ENCODE measurements at regions of chr5 and their contacts with region 1.

Region 1: GRCh38 chr5:43305948-43306565 is 7.2 kb downstream of the HMGCS1 start:
- DNase-seq: peak; percentile 76
- H3K4me3 Mint-ChIP-seq: peak overlapping the region; percentile 5
- H3K27ac Mint-ChIP-seq: peak overlapping the region; percentile 50
- H3K4me1 Mint-ChIP-seq: peaks cover 71% of the 10 kb centered on the region
- H3K27me3 Mint-ChIP-seq: no peaks in the 10 kb centered on the region

Region 2: GRCh38 chr5:43191740-43192557 is 114.1 kb before region 1 on chr5 and contains the start of gene NIM1K:
- intact Hi-C with region 1: loop called (anchors 1 kb)
- DNase-seq: peak; percentile 85
- H3K4me3 Mint-ChIP-seq: peak within 1 kb of the TSS; percentile 86
- H3K27ac Mint-ChIP-seq: peak within 1 kb of the TSS; percentile 86
- H3K4me1 Mint-ChIP-seq: peaks cover 31% of the 10 kb centered on the region
- H3K27me3 Mint-ChIP-seq: peaks cover 15% of the 10 kb centered on the region
- total RNA-seq, gene NIM1K: 0.82 and 0.97 TPM in 2 replicates

Region 3: DNA sequence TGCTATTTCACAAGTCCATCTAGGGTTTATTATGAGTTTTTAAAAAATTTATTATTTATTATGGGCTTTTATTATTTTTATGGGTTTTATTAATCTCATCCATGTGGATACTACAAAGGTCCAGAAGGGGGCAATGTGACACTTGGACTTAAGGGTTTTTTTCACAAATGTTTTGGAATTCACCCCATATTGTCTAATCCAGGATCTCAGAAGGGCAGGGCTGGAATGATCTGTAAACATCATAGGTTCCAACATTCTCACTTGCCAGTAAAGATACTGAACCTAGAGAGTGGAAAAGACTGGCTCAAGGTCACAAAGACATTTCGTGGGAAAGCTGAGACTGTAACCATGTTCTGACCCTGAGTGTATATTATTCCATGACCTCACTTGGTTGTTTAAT is 78.4 kb before region 1 on chr5:
- intact Hi-C with region 1: loop called (anchors 5 kb)
- DNase-seq: no peak
- H3K4me3 Mint-ChIP-seq: no peak overlapping the region
- H3K27ac Mint-ChIP-seq: no peak overlapping the region
- H3K4me1 Mint-ChIP-seq: no peaks in the 10 kb centered on the region
- H3K27me3 Mint-ChIP-seq: no peaks in the 10 kb centered on the region

Region 4: GRCh38 chr5:43256261-43256966 is 49.6 kb before region 1 on chr5:
- intact Hi-C with region 1: no loop called
- DNase-seq: no peak
- H3K4me3 Mint-ChIP-seq: no peak overlapping the region
- H3K27ac Mint-ChIP-seq: no peak overlapping the region
- H3K4me1 Mint-ChIP-seq: no peaks in the 10 kb centered on the region
- H3K27me3 Mint-ChIP-seq: peaks cover 29% of the 10 kb centered on the region

Region 5: DNA sequence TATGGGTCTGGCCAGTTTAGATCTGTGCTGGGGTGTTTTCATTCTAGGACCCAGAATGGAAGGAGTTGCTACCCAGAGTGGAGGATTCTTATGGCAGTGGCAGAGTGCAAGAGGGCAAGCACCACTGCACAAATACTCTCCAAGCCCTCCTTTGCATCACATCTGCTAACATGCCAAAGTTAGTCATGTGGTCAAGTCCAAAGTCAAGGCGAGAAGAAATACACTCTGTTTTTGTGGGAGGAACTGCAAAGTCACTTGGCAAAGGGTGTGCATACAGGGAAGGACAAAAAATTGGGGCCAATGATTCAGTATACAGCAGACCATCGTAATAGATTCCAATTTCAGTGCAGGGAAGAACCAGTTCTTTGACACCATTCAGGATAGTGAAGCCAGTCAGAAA is 51.0 kb after region 1 on chr5:
- intact Hi-C with region 1: no loop called
- DNase-seq: no peak
- H3K4me3 Mint-ChIP-seq: no peak overlapping the region
- H3K27ac Mint-ChIP-seq: no peak overlapping the region
- H3K4me1 Mint-ChIP-seq: no peaks in the 10 kb centered on the region
- H3K27me3 Mint-ChIP-seq: no peaks in the 10 kb centered on the region

Region 6: GRCh38 chr5:43367909-43368648 is 62.0 kb after region 1 on chr5:
- intact Hi-C with region 1: no loop called
- DNase-seq: no peak
- H3K4me3 Mint-ChIP-seq: no peak overlapping the region
- H3K27ac Mint-ChIP-seq: no peak overlapping the region
- H3K4me1 Mint-ChIP-seq: no peaks in the 10 kb centered on the region
- H3K27me3 Mint-ChIP-seq: no peaks in the 10 kb centered on the region